Activated CD4-positive, alpha-beta T cell treated with anti-CD3 and anti-CD28 coated beads, Interleukin-2, amount 10 ng/mL, durations not matched to agents 24 days and 14 days (primary cell): ENCODE measurements at regions of chr10 and their contacts with region 1.

Region 1: GRCh38 chr10:96831867-96832720 is at the start of gene LCOR:
- DNase-seq: peak; percentile 93
- H3K4me3 Mint-ChIP-seq: peak within 1 kb of the TSS; percentile 93
- H3K27ac Mint-ChIP-seq: peak within 1 kb of the TSS; percentile 95
- H3K4me1 Mint-ChIP-seq: peaks cover 36% of the 10 kb centered on the region
- H3K27me3 Mint-ChIP-seq: peaks cover 3% of the 10 kb centered on the region
- total RNA-seq, gene LCOR: 20.5 and 22.6 TPM in 2 replicates

Region 2: DNA sequence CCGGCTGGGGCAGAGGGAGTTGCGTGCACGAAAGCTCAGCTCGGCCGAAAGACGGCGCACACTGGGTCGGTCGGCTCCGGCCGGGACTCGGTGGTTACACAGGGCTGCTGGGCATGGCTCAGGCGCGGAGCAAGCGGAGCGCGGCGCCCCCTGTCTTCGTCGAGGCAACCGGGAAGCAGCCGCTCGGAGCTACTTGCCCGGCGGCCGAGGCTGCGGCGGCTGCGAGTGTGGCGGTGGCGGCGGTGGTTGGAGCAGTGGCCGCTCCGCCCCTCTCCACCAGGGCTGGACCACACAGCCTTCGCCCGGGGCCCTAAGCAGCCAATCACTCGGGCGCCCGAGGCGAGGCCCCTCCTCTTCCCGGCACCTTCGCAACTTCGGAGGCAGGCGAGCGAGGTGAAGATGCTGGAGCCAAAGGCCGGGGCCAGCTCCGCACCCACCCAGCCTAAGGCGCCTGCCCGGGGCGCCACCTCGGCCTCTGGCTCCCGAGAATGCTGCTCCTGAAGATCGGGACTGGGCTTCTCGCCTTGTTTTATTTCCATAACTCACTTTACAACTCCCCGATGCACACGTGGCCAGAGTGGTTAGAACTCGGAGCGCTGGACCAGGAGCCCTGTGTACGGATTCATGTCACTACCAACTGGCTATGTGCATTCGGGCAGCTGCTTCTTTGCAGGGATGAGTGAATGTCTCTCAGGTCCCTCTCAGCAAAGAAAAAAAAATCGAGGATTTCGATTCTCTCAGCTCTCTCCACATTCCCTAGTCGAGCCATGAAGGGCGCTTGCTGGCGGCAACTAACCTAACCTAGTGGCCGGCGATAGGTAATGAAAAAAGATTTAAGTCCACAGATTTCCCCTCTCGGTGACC is 318.2 kb before region 1 on chr10 and contains the start of gene TLL2:
- intact Hi-C with region 1: loop called (anchors 5 kb)
- DNase-seq: peak; percentile 89
- H3K4me3 Mint-ChIP-seq: peak within 1 kb of the TSS; percentile 76
- H3K27ac Mint-ChIP-seq: no peak within 1 kb of the TSS
- H3K4me1 Mint-ChIP-seq: peaks cover 13% of the 10 kb centered on the region
- H3K27me3 Mint-ChIP-seq: peaks cover 62% of the 10 kb centered on the region
- total RNA-seq, gene TLL2: not detected in 2 replicates

Region 3: GRCh38 chr10:96642973-96643372 is 189.1 kb before region 1 on chr10:
- intact Hi-C with region 1: loop called (anchors 1 kb)
- DNase-seq: peak; percentile 85
- H3K4me3 Mint-ChIP-seq: no peak overlapping the region
- H3K27ac Mint-ChIP-seq: no peak overlapping the region
- H3K4me1 Mint-ChIP-seq: peaks cover 21% of the 10 kb centered on the region
- H3K27me3 Mint-ChIP-seq: peaks cover 6% of the 10 kb centered on the region

Region 4: DNA sequence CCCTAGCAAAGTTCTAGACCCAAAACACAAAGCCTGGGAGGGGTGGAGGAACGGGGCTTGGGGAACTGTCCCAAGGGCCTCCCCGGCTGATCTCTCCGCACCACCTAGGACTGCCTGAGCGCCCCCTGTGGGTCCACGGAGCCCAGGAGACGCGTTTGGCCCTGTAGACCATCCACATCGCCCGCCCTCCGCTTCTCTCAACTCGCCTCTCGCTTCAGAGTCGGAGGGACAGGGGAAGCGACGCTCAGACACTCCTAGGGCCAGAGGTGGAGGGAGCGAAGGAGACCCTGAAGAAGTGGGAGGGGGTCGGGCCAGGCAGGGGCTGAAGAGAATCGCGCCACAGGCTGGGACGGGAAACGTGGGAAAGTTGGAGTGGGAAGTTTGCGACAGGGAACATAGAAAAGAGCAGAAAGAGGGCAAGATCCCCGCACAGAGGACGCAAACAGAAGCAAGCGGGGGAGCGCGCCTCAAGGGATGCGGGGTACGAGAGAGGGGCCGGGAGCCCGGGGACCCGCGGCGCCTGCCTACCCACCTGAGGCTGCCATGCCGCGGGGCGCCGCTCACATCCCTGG is 112.2 kb before region 1 on chr10:
- intact Hi-C with region 1: loop called (anchors 2 kb)
- DNase-seq: peak; percentile 78
- H3K4me3 Mint-ChIP-seq: peak overlapping the region; percentile 99
- H3K27ac Mint-ChIP-seq: peak overlapping the region; percentile 92
- H3K4me1 Mint-ChIP-seq: peaks cover 22% of the 10 kb centered on the region
- H3K27me3 Mint-ChIP-seq: peaks cover 21% of the 10 kb centered on the region

Region 5: DNA sequence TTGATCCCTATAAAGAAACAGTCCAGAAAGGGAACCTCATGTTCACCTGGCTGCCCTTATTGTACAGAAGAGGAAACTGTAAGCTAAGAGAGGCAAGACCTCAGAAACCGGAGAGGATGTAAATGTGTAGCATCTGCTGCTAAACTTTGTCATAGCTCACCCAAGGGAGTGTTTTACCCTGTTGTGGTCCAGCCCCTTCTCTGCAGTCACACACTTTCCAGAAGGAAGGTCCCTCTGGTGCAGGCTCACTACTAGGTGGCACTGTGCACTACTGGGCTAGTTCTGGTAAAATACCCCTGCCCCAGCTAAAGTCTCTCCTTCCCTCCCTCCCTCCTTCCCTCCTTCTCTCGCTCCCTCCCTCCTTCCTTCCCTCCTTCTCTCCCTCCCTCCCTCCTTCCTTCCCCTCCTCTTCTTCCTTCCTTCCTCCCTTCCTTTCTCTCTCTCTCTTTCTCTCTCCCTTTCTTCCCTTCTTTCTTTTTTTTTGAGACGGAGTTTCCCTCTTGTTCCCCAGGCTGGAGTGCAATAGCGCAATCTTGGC is 42.5 kb before region 1 on chr10:
- intact Hi-C with region 1: loop called (anchors 1 kb)
- DNase-seq: peak; percentile 87
- H3K4me3 Mint-ChIP-seq: no peak overlapping the region
- H3K27ac Mint-ChIP-seq: no peak overlapping the region
- H3K4me1 Mint-ChIP-seq: no peaks in the 10 kb centered on the region
- H3K27me3 Mint-ChIP-seq: peaks cover 18% of the 10 kb centered on the region

Region 6: GRCh38 chr10:97292097-97292862 is 460.2 kb after region 1 on chr10 and contains the start of gene ARHGAP19:
- intact Hi-C with region 1: loop called (anchors 10 kb)
- DNase-seq: peak; percentile 98
- H3K4me3 Mint-ChIP-seq: peak within 1 kb of the TSS; percentile 88
- H3K27ac Mint-ChIP-seq: peak within 1 kb of the TSS; percentile 87
- H3K4me1 Mint-ChIP-seq: peaks cover 23% of the 10 kb centered on the region
- H3K27me3 Mint-ChIP-seq: no peaks in the 10 kb centered on the region
- total RNA-seq, gene ARHGAP19: 26.4 and 30.7 TPM in 2 replicates

Region 7: GRCh38 chr10:97498076-97498840 is 666.2 kb after region 1 on chr10 and contains the start of gene MMS19:
- intact Hi-C with region 1: loop called (anchors 10 kb)
- DNase-seq: peak; percentile 100
- H3K4me3 Mint-ChIP-seq: peak within 1 kb of the TSS; percentile 94
- H3K27ac Mint-ChIP-seq: peak within 1 kb of the TSS; percentile 100
- H3K4me1 Mint-ChIP-seq: peaks cover 38% of the 10 kb centered on the region
- H3K27me3 Mint-ChIP-seq: peaks cover 33% of the 10 kb centered on the region
- total RNA-seq, gene MMS19: 100 and 103 TPM in 2 replicates